Heart left ventricle (tissue), 16 donors: ENCODE measurements at regions of chr6 and their contacts with region 1.

Region 1: DNA sequence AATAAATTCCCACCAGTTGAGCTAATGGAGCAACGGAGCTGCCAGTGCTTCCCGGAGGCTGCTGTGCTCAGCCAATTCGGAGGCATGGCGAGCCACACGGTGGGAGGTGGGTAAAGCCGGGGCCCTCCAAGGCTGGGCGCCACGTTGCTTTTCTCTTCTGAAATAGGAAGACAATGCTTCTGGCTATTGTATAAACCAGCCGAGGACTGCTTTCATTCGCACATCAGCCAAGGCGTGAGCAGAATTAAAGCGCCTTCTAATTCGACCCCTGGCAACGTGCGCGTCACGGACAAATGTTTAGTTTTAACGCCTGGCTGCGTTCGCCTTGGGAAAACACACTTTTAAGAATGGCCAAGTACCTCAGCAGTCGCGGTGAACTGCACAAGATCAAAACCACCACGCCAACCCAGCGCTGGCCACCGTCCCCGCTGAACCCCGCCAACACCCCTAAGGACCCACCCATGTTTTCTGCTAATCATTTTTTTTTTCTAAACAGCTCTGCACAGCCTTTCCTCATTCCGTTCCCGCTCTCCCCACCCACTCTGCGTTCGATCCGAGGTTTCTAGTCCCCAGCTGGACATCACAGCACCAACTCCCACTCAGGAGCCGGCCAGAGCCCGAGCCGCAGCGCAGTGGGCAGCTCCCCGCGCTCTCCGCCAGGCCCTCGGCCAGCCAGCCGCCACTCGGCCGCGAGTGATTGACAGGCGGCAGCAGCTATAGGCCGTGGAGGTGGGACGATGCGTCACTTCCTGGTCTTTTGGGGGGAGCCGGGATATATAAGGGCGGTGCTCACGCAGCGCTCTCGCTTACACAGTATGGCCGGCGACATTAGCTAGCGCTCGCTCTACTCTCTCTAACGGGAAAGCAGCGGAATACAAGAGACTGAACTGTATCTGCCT is at the start of gene AMD1:
- DNase-seq: peak; percentile 98 to 99 (median 98)
- ATAC-seq: peak; percentile 92 to 95 (median 94)
- H3K4me3 ChIP-seq: peak within 1 kb of the TSS; percentile 74 to 95 (median 90)
- H3K27ac ChIP-seq: peak within 1 kb of the TSS; percentile 74 to 98 (median 94)
- H3K4me1 ChIP-seq: peaks cover 2 to 36% (median 29%) of the 10 kb centered on the region in 12 donors
- H3K27me3 ChIP-seq: no peaks in the 10 kb centered on the region
- CTCF ChIP-seq: no peak
- POLR2A ChIP-seq: peak; percentile 93 to 98
- total RNA-seq, gene AMD1: 44.5 to 85.6 (median 70.4) TPM

Region 2: GRCh38 chr6:110543106-110543505 is 331.1 kb before region 1 on chr6:
- intact Hi-C with region 1: loop called in 1 of 10 experiments (anchors 5 kb)
- DNase-seq: peak in 1 of 5 donors; percentile 35
- ATAC-seq: peak in 3 of 4 donors; percentile 23 to 33 (median 25)
- H3K4me3 ChIP-seq: no peak overlapping the region
- H3K27ac ChIP-seq: peak overlapping the region; percentile 58 to 94 (median 82)
- H3K4me1 ChIP-seq: peaks cover 0 to 33% (median 15%) of the 10 kb centered on the region in 12 donors
- H3K27me3 ChIP-seq: no peaks in the 10 kb centered on the region
- CTCF ChIP-seq: no peak
- POLR2A ChIP-seq: no peak

Region 3: DNA sequence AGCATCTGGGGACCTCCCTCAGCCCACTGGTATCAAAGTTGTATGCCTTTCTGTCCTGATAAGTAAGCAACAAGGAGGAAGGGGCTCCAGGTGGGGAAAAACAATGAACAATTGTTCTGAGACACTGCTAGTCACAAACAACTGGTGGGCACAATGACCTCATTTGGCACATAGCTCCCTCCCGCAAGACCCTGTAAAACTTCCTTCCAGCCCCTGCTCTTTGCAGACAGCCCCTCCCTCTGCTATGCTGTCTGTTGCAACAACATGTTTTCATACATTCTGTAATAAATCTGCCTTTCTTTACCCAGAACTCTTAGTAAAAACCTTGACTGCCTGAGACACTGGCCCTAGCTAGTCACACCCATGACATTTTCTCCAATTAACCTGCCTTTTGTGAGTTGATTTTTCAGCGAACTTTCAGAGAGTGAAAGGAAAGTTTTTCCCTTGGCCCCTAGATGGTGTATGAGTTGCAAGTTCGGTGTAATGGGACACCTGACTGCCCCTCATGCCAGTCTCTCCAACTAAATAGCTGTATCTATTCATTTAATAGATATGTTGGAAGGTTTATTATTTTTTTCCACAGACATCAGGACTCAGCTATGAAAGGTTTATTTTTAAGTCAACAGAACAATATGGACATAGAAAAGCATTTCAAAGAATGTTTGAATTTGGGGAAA is 255.5 kb before region 1 on chr6:
- intact Hi-C with region 1: loop called in 1 of 10 experiments (anchors 5 kb)
- DNase-seq: no peak
- ATAC-seq: peak in 3 of 4 donors; percentile 47 to 60 (median 55)
- H3K4me3 ChIP-seq: no peak overlapping the region
- H3K27ac ChIP-seq: peak overlapping the region in 5 of 12 donors; percentile 7 to 33 (median 15)
- H3K4me1 ChIP-seq: peaks cover 0 to 31% (median 12%) of the 10 kb centered on the region in 12 donors
- H3K27me3 ChIP-seq: no peaks in the 10 kb centered on the region
- CTCF ChIP-seq: peak in 8 of 12 donors; percentile 15 to 44 (median 27)
- POLR2A ChIP-seq: no peak

Region 4: DNA sequence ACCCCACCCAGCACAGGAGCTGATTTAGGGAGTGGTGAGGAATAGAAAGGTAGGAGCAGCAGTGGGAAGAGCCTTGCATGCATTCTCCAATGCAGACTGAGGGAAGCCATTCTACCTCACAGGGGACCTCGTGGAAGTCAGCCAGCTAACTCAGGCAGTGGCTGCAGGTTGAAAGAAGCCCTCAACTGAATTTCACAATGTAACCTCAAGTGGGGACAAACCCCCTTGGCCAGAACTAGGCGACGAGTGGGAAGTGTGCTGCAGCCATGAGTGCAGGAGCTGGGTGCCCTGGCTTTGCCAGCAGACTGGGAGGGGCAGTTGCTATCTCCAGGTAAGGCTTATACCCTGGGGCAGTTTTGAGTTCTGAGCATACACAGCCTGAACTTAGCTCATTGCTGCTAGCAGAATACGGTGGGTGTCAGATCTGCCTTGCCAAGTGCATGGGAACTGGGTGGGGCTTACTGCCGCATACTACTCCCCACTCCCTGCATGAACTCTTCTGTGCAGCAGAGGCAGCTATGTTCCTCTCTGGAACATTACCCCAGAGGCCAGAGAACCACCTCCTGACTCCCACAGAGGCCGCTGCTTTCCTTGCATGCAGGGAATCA is 185.5 kb before region 1 on chr6:
- intact Hi-C with region 1: loop called in 8 of 10 experiments (anchors 2 to 5 kb)
- DNase-seq: no peak
- ATAC-seq: peak in 2 of 4 donors; percentile 38 to 42
- H3K4me3 ChIP-seq: no peak overlapping the region
- H3K27ac ChIP-seq: no peak overlapping the region
- H3K4me1 ChIP-seq: peaks cover 0 to 30% (median 0%) of the 10 kb centered on the region in 12 donors
- H3K27me3 ChIP-seq: no peaks in the 10 kb centered on the region
- CTCF ChIP-seq: no peak
- POLR2A ChIP-seq: no peak

Region 5: GRCh38 chr6:110958329-110959192 is 84.3 kb after region 1 on chr6 and contains the start of gene GTF3C6:
- intact Hi-C with region 1: loop called in 4 of 10 experiments (anchors 2 to 10 kb)
- DNase-seq: peak; percentile 94 to 97 (median 96)
- ATAC-seq: peak; percentile 97 to 99 (median 99)
- H3K4me3 ChIP-seq: peak within 1 kb of the TSS; percentile 60 to 97 (median 82)
- H3K27ac ChIP-seq: peak within 1 kb of the TSS; percentile 67 to 96 (median 91)
- H3K4me1 ChIP-seq: peaks cover 0 to 23% (median 11%) of the 10 kb centered on the region in 12 donors
- H3K27me3 ChIP-seq: no peaks in the 10 kb centered on the region
- CTCF ChIP-seq: peak in 2 of 12 donors; percentile 6 to 14
- POLR2A ChIP-seq: peak in 1 of 2 donors; percentile 66
- total RNA-seq, gene GTF3C6: 55.4 to 133 (median 104) TPM